ENCODE measurements at regions of chr19 and their contacts with region 1.

Region 1: GRCh38 chr19:55599468-55600279 is at the start of gene FIZ1:
- DNase-seq: peak in 1 of 2 donors; percentile 99
- H3K4me3 ChIP-seq: peak within 1 kb of the TSS; percentile 60 to 72
- H3K27ac ChIP-seq: peak within 1 kb of the TSS; percentile 95
- H3K4me1 ChIP-seq: peaks cover 20% of the 10 kb centered on the region
- H3K27me3 ChIP-seq: no peaks in the 10 kb centered on the region
- CTCF ChIP-seq: no peak
- POLR2A ChIP-seq: peak in 1 of 2 donors; percentile 27
- total RNA-seq, gene FIZ1: 5.4 TPM

Region 2: GRCh38 chr19:55407800-55408532 is 191.7 kb before region 1 on chr19:
- intact Hi-C with region 1: loop called (anchors 10 kb)
- DNase-seq: peak in 1 of 2 donors; percentile 99
- H3K4me3 ChIP-seq: peak overlapping the region; percentile 76 to 100
- H3K27ac ChIP-seq: peak overlapping the region; percentile 92
- H3K4me1 ChIP-seq: peaks cover 26% of the 10 kb centered on the region
- H3K27me3 ChIP-seq: no peaks in the 10 kb centered on the region
- CTCF ChIP-seq: peak in 1 of 3 experiments; percentile 18
- POLR2A ChIP-seq: no peak

Region 3: DNA sequence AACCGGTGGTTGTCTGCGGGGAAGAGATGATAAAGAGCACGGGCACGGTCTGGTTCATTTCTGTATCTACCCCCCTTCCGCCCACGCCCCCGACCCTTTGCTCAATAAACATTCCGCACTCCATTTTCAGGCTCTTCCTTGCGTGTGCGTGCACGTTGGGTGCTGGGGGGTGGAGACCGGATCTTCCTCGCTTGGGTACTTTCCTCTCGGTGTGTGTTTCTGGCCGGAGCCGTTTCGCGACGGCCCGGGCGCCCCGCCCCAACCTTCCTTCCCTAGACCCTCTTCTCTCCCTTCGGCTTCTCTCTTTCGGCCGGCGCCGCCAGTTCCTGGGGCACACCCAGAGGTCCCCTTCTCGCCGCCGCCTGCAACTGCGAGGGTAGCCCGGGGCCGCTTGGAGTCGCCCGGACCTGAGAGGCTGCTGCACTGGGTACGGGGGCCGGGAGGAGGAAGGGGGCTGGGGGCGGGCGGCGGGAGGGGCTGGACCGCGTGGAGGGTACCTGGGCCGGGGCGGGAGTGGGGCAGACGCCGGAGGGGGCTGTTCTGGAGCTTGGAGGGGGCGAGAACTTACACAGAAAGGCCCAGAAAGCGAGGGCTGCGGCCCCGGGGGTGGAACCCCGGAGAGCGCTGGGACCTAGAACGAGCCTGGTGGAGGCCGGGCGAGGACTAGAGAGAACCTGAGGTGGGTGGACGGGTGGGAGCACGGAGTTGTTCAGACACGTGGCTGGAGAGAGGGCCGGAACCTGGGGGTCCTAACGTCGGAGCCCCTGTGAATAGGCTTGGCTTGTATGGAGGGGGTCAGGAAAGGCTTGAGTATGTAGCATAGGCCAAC is 43.9 kb after region 1 on chr19 and contains the start of gene ZNF581:
- intact Hi-C with region 1: no loop called
- DNase-seq: no peak
- H3K4me3 ChIP-seq: peak within 1 kb of the TSS; percentile 57 to 83
- H3K27ac ChIP-seq: peak within 1 kb of the TSS; percentile 97
- H3K4me1 ChIP-seq: peaks cover 66% of the 10 kb centered on the region
- H3K27me3 ChIP-seq: no peaks in the 10 kb centered on the region
- CTCF ChIP-seq: no peak
- POLR2A ChIP-seq: no peak
- total RNA-seq, gene ZNF581: 15.5 TPM

Measured in vagina (tissue), 2 donors.